Activated naive CD4-positive, alpha-beta T cell treated with anti-CD3 and anti-CD28 coated beads, Interleukin-2, amount 10 ng/mL, durations not matched to agents 7 days and 5 days (primary cell): ENCODE measurements at regions of chr4 and their contacts with region 1.

Region 1: DNA sequence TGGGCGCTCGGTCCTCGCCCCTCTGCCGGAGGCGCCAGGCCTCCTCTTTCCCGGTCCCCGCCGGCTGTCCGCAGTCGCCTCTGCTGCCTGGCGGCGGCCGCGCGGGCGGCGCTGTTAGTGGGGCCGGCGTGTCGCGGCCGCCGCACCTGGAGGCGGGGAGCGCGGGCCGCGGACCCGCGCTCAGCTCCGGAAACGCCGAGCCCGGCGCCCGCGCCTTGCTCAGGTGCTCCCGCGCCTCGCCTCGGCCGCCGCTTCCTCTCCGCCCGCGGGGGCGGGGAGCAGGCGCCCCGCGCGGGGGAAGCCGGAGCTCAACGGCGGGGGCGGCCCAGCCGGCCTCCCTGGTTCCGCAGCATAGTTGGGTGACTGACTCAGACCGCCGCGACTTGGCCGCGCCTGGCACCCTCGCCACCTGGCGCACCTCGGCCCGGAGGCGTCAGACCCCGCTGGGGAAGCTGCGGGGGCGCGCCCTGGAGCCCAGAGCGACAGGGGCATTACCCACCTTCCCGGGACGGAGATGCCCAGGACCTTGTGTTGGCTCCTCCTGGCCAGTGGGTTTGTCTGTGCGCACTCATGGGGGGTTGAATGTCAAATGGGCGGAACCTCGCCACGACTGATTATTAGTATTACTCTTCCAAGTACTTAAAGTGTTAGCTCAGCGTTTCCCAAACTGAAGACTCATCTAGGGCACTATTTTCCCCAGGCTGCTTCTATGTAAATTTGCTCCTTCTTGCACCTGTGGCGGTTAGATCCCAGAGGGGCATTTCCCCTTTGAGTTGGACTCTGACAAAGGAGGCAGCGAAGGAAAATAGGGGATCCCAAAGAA is at the start of gene ARAP2:
- DNase-seq: peak; percentile 75
- H3K4me3 Mint-ChIP-seq: peak within 1 kb of the TSS; percentile 85
- H3K27ac Mint-ChIP-seq: peak within 1 kb of the TSS; percentile 93
- H3K4me1 Mint-ChIP-seq: peaks cover 42% of the 10 kb centered on the region
- H3K27me3 Mint-ChIP-seq: peaks cover 30% of the 10 kb centered on the region

Region 2: DNA sequence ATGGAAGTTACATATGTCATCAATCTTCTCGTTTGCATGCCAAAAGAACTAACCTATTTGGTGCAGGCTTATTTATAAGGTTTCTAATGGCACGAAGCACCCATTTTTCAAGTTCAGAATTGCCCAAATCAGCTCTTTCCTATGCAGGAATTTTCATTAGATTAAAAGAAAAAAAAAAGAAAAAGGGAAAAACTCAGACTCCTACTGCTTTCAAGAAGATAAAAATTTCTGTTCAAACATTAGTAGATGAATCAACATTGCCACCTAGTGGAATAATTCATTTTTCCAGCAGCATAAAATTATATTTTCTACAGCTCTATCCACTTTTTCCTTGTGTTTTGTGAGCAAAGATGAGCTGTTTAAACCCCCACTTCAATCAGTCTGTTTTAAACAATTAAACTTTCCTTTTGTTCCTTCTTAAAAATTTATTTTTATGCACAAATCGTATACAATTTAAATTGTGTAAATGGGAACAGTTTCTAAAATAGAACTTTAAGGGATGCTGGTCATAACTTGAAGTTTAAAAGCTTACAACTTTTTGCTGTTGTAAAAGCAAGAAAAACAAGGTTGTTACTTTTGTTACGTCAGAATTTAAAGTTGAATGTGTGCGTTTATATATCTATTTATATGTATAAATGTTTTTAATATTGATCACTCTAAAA is 310.0 kb before region 1 on chr4:
- CTCF ChIA-PET with region 1: no interaction called
- DNase-seq: no peak
- H3K4me3 Mint-ChIP-seq: no peak overlapping the region
- H3K27ac Mint-ChIP-seq: no peak overlapping the region
- H3K4me1 Mint-ChIP-seq: no peaks in the 10 kb centered on the region
- H3K27me3 Mint-ChIP-seq: no peaks in the 10 kb centered on the region

Region 3: DNA sequence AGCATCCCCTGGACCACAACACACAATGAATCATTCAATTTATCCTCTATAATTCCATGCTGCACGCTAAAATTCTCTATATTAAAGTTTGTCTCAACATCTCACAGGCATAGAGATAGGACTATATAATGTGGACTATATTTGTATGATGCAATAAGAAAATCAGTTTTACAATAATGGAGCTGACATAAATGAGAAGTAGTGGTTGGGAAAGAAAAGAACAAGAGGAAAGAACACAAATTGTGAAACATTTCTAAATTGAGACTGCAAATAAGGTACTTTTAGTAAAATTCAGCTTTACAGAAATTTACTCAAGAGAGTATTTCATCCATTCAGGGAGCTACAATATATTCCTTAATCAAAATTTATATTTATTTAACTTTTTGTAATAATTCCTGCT is 120.6 kb before region 1 on chr4:
- CTCF ChIA-PET with region 1: no interaction called
- DNase-seq: no peak
- H3K4me3 Mint-ChIP-seq: no peak overlapping the region
- H3K27ac Mint-ChIP-seq: no peak overlapping the region
- H3K4me1 Mint-ChIP-seq: no peaks in the 10 kb centered on the region
- H3K27me3 Mint-ChIP-seq: no peaks in the 10 kb centered on the region

Region 4: DNA sequence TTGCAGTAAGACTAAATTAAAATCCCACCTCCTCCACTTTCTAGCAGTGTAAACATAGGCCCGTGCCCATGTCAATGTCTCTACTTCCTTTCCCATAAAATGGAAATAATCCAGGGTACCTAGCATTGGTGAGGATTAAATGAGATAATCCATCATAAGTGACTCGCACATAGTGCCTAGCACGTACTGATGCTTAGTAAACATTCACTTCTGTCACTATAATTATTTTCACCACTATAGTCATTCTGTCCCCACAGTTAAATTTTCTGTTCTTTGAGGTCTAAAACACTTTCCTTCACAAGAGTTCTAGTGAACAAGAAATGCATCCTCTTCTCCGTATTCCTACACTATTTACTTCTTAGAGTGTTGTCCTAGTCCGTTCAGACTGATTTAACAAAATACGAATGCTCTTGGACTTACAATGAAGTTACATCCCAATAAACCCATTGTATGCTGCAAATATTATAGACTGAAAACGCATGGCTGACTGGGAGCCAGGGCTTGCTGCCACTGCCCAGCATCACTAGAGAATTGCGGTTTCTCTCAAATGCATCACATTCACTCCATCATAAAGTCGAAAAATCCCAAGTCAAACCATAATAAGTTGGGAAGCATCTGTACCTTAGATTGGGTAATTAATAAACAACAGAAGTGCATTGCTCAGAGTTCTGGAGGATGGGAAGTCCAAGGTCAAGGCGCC is 10.8 kb before region 1 on chr4:
- CTCF ChIA-PET with region 1: no interaction called
- DNase-seq: no peak
- H3K4me3 Mint-ChIP-seq: no peak overlapping the region
- H3K27ac Mint-ChIP-seq: no peak overlapping the region
- H3K4me1 Mint-ChIP-seq: peaks cover 26% of the 10 kb centered on the region
- H3K27me3 Mint-ChIP-seq: no peaks in the 10 kb centered on the region

Region 5: DNA sequence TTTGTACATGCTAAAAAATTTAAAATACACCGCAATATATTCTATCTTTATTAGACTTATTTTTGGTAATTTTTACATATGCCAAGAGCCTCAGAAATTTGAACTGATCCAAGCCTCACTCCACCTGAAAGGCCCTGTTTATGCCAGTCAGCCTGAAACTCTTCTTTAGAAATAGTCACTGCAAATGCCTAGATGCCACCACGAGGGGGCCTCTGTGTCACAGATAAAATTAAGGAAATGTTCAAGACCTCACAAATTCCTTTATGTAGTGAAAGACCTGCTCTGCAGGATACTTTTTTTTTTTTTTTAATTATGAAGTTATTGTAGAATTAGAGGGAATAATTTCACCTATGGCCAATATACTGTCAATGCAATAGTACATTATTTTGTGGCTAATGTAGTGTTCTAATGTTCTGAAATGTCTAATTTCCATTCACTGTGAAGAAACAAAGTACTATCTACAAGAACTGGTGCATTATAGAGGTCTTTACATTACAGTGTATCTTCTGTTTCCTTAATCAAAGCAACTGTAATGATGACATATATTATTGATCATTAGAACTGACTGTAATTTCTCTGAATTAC is 106.7 kb after region 1 on chr4:
- CTCF ChIA-PET with region 1: interaction called, 10 read pairs
- DNase-seq: peak; percentile 84
- H3K4me3 Mint-ChIP-seq: no peak overlapping the region
- H3K27ac Mint-ChIP-seq: no peak overlapping the region
- H3K4me1 Mint-ChIP-seq: peaks cover 19% of the 10 kb centered on the region
- H3K27me3 Mint-ChIP-seq: peaks cover 9% of the 10 kb centered on the region